ENCODE measurements at regions of chr12 and their contacts with region 1.

Region 1: DNA sequence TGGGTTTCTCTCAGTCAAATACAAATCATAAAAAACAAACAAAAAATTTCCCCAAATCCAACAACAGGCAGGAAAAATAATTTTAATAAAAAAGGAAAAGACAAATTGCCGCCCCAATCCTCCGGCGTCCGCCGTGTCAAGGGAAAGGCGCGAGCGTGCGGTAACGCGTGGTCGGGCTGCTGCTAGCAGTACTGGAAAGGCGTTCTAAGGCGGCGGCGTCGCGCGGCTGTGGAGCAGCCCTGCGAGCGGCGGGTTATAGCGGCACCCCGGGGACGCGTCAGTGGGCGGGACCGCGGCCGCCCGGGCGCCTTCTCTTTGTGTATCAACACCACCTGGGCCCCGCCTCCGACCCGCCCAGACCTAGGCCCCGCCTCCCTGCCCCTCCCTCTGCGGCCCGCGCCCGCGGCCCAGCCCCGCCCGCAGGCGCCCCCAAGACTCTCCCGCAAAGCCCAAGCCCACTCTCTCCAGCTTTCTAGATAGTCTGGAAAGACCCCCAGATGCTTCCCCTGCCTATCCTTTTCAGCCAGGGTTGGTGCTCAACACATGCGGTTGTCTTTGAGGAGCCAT is at the start of gene SLC38A2:
- DNase-seq: peak; percentile 97
- ATAC-seq: peak; percentile 88
- H3K4me3 Mint-ChIP-seq: peak within 1 kb of the TSS; percentile 96
- H3K27ac Mint-ChIP-seq: peak within 1 kb of the TSS; percentile 99
- H3K4me1 Mint-ChIP-seq: peaks cover 46% of the 10 kb centered on the region
- H3K27me3 Mint-ChIP-seq: no peaks in the 10 kb centered on the region
- CTCF ChIP-seq: no peak
- total RNA-seq, gene SLC38A2: 231 and 247 TPM in 2 replicates

Region 2: GRCh38 chr12:46217541-46218321 is 154.9 kb before region 1 on chr12:
- CTCF ChIA-PET with region 1: no interaction called
- POLR2A ChIA-PET with region 1: interaction called, 14 read pairs
- intact Hi-C with region 1: loop called (anchors 5 kb)
- DNase-seq: no peak
- ATAC-seq: peak; percentile 63
- H3K4me3 Mint-ChIP-seq: peak overlapping the region; percentile 49
- H3K27ac Mint-ChIP-seq: peak overlapping the region; percentile 98
- H3K4me1 Mint-ChIP-seq: peaks cover 97% of the 10 kb centered on the region
- H3K27me3 Mint-ChIP-seq: no peaks in the 10 kb centered on the region
- CTCF ChIP-seq: no peak

Region 3: DNA sequence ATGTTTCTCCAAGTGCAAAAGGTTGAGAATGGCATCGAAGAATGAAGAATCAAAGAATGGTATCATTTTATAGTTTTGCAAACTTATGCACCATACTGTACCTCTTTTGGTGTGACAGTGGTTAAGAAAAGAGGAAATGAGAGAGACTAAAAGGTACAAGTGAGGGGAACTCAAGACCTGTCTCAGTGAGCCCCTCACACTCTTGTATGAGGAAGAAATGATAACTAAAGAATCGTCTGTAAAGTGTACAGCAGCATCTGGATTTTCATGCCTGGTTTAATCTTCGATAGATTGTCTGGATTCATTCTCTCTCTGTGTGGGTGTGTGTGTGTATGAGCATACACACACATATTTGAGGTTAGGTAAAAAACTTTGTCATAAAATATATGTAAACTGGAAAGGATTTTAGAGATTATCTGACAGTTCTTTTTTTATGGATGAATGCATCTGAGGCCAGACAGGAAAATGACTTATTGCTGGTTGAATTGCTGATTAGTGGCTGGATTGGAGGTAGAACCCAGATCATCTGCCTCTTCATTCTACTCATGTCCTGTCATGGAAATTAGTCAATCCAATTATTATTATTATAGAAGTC is 15.9 kb after region 1 on chr12:
- CTCF ChIA-PET with region 1: interaction called, 8 read pairs
- POLR2A ChIA-PET with region 1: interaction called, 166 read pairs
- intact Hi-C with region 1: loop called (anchors 1 kb)
- DNase-seq: no peak
- ATAC-seq: peak; percentile 66
- H3K4me3 Mint-ChIP-seq: peak overlapping the region; percentile 69
- H3K27ac Mint-ChIP-seq: peak overlapping the region; percentile 91
- H3K4me1 Mint-ChIP-seq: peaks cover 83% of the 10 kb centered on the region
- H3K27me3 Mint-ChIP-seq: no peaks in the 10 kb centered on the region
- CTCF ChIP-seq: no peak

Region 4: DNA sequence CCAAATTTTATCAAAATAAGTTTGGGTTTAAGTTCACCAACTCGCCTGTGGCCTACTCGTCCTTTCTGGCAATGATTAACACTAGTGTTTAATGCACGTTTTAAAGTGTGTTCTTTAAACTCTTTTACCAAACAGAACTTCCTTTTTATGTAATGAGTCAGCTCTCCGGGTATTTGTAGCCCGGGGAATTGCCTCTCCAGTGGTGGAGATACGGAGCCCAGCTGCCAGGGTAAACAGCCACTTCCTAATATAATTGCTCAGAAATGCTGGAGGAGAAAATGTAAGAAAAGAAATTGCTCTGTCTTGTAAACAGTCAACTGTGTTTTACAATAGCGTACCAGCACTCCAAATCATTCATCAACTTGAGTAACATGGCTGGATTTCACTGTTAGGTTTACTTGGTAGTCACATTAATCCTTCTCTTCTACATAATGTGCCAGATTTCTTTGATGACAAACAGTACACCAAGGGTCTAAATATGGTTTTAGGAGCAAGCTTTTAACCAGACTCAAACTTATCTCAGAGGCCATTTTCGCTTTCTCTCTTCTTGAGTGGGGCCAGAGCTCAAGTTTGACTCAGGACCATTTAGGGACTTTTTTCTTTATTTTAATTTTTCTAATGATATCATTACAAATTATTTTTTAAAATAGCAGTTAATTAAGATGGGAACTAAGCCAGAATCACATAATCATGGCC is 101.2 kb after region 1 on chr12:
- CTCF ChIA-PET with region 1: no interaction called
- POLR2A ChIA-PET with region 1: interaction called, 6 read pairs
- intact Hi-C with region 1: loop called (anchors 2 kb)
- DNase-seq: no peak
- ATAC-seq: peak; percentile 72
- H3K4me3 Mint-ChIP-seq: peak overlapping the region; percentile 77
- H3K27ac Mint-ChIP-seq: peak overlapping the region; percentile 75
- H3K4me1 Mint-ChIP-seq: peaks cover 23% of the 10 kb centered on the region
- H3K27me3 Mint-ChIP-seq: no peaks in the 10 kb centered on the region
- CTCF ChIP-seq: no peak

Region 5: DNA sequence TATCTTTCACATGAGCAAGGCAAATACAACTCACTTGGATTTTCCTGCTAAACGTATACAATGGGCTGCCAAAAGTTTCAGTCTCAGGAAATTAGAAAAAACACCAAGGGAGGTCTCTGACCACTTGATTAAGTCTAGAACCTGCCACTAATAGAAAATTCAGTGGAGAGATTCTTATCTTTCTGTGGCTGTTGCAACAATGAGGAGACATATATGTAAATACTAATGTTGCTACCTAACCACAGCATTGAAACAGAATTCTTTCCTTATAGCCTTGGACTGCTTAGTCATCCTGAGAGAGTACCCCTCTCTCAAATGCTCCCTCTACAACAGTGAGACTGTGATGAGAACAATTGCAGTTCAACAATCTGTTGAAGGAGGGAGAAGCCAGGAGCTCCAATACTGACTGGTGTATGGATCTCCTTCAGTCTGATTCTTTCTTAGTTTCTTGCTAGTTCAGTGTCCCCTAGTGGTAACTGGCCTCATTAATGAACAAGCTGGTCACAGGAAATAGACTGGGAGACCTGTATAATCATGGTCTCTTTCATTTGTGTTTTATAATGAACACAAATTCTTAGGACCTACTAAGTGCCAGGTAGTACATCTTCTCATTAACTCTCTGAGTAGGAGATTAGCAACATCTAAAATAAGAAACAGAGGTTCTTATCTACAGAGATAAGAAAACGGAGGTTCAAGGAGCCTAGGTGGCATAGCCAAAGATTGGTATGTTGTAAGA is 288.7 kb after region 1 on chr12:
- CTCF ChIA-PET with region 1: interaction called, 13 read pairs
- POLR2A ChIA-PET with region 1: interaction called, 26 read pairs
- intact Hi-C with region 1: loop called (anchors 1 kb)
- DNase-seq: no peak
- ATAC-seq: peak; percentile 94
- H3K4me3 Mint-ChIP-seq: peak overlapping the region; percentile 3
- H3K27ac Mint-ChIP-seq: no peak overlapping the region
- H3K4me1 Mint-ChIP-seq: peaks cover 31% of the 10 kb centered on the region
- H3K27me3 Mint-ChIP-seq: no peaks in the 10 kb centered on the region
- CTCF ChIP-seq: no peak

Region 6: GRCh38 chr12:47812797-47813510 is 1440.3 kb after region 1 on chr12:
- CTCF ChIA-PET with region 1: no interaction called
- POLR2A ChIA-PET with region 1: no interaction called
- intact Hi-C with region 1: loop called (anchors 5 kb)
- DNase-seq: peak; percentile 83
- ATAC-seq: peak; percentile 74
- H3K4me3 Mint-ChIP-seq: peak overlapping the region; percentile 84
- H3K27ac Mint-ChIP-seq: peak overlapping the region; percentile 99
- H3K4me1 Mint-ChIP-seq: peaks cover 97% of the 10 kb centered on the region
- H3K27me3 Mint-ChIP-seq: no peaks in the 10 kb centered on the region
- CTCF ChIP-seq: no peak

Measured in activated B cell treated with CpG ODN at 0.5 μM for 24 hours (primary cell).